Activated CD4-positive, alpha-beta memory T cell treated with anti-CD3 and anti-CD28 coated beads for 36 hours (primary cell): ENCODE measurements at regions of chr11 and their contacts with region 1.

Region 1: GRCh38 chr11:128716661-128717210 is 22.9 kb downstream of the FLI1 start:
- DNase-seq: peak; percentile 72
- H3K4me3 Mint-ChIP-seq: peak overlapping the region; percentile 63
- H3K27ac Mint-ChIP-seq: peak overlapping the region; percentile 97
- H3K4me1 Mint-ChIP-seq: peaks cover 97% of the 10 kb centered on the region
- H3K27me3 Mint-ChIP-seq: no peaks in the 10 kb centered on the region

Region 2: GRCh38 chr11:128302425-128303186 is 414.1 kb before region 1 on chr11:
- CTCF ChIA-PET with region 1: no interaction called
- POLR2A ChIA-PET with region 1: no interaction called
- intact Hi-C with region 1: loop called (anchors 5 kb)
- DNase-seq: peak; percentile 81
- H3K4me3 Mint-ChIP-seq: peak overlapping the region; percentile 79
- H3K27ac Mint-ChIP-seq: peak overlapping the region; percentile 94
- H3K4me1 Mint-ChIP-seq: peaks cover 78% of the 10 kb centered on the region
- H3K27me3 Mint-ChIP-seq: no peaks in the 10 kb centered on the region

Region 3: GRCh38 chr11:128587452-128587851 is 129.3 kb before region 1 on chr11 and contains the start of gene ETS1:
- CTCF ChIA-PET with region 1: no interaction called
- POLR2A ChIA-PET with region 1: no interaction called
- intact Hi-C with region 1: no loop called
- DNase-seq: no peak
- H3K4me3 Mint-ChIP-seq: no peak within 1 kb of the TSS
- H3K27ac Mint-ChIP-seq: no peak within 1 kb of the TSS
- H3K4me1 Mint-ChIP-seq: peaks cover 15% of the 10 kb centered on the region
- H3K27me3 Mint-ChIP-seq: no peaks in the 10 kb centered on the region
- total RNA-seq, gene ETS1: 436 to 444 TPM

Region 4: DNA sequence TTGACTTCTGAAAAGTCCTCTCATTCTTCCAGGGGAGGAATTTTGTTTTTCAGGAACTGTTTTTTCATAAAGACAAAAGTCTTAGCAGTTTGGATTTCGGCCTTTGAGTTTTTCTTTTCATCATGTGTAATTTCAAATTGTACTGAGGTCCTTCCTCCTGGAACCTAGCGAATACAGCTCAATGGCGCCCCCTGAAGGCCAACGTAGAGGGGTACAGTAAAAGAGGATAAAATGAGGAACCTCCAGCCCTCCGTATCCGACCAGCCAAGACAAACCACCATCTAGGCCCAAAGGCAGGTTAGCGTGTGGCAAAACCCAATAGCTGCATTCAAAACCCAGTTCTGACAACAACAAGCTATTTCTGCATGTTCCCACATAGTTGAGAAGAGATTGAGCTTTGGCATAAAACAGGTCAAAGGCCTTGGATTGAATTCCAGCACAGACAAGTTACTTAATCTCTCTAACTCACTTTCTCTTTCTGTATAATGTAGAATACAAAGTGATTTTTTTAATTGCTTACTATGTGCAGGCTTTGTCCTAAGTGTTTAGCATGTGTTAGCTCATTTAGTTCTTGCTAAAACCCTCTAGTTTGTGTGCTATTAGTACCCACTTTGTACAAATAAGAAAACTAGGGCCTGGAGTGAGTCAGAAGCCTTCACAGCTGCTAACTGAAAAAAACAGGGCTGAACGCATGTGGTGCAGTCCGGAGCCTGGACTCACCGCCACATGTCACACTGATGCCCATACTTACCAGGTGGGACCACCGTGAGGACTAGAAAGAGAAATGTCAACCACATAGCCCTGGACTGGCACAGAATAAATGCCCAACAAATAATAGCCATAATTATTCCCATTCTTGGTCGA is 86.1 kb before region 1 on chr11:
- CTCF ChIA-PET with region 1: no interaction called
- POLR2A ChIA-PET with region 1: no interaction called
- intact Hi-C with region 1: no loop called
- DNase-seq: peak; percentile 94
- H3K4me3 Mint-ChIP-seq: peak overlapping the region; percentile 65
- H3K27ac Mint-ChIP-seq: peak overlapping the region; percentile 92
- H3K4me1 Mint-ChIP-seq: peaks cover 66% of the 10 kb centered on the region
- H3K27me3 Mint-ChIP-seq: no peaks in the 10 kb centered on the region

Region 5: DNA sequence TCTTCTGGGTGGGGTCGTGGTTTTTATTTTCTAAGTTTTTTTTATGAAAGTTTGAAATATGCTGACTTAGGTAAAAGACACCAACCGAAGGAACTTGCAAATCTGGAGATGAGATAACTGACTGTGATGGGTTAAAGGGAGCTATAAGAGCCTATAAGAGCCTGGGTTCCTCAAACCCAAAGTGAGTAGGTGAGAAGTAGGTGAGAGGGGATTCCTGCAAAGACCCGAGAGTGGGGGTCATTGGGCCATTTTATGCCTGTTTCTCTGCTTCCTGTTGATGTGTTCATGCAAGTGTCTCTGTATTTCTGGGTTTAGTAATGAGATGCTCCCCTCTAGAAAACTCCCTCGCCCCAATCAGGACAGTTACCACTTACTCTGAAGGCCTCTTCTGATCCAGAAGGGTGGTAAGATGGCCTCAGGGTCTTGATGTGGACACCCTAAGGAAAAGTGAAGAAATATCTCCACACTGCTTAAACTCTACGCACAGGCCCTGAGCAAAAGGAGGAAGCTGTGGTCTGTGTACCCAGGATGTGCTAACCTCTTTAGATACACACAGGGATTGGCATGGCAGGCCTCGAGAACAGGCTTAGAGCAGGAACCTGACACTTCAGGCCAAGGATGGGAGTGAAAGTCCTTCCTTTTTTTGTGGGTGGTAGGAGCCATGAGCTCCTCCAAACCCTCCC is 21.1 kb before region 1 on chr11:
- CTCF ChIA-PET with region 1: interaction called, 4 read pairs
- POLR2A ChIA-PET with region 1: interaction called, 12 read pairs
- intact Hi-C with region 1: loop called (anchors 1 kb)
- DNase-seq: peak; percentile 55
- H3K4me3 Mint-ChIP-seq: peak overlapping the region; percentile 78
- H3K27ac Mint-ChIP-seq: peak overlapping the region; percentile 89
- H3K4me1 Mint-ChIP-seq: peaks cover 57% of the 10 kb centered on the region
- H3K27me3 Mint-ChIP-seq: peaks cover 5% of the 10 kb centered on the region

Region 6: DNA sequence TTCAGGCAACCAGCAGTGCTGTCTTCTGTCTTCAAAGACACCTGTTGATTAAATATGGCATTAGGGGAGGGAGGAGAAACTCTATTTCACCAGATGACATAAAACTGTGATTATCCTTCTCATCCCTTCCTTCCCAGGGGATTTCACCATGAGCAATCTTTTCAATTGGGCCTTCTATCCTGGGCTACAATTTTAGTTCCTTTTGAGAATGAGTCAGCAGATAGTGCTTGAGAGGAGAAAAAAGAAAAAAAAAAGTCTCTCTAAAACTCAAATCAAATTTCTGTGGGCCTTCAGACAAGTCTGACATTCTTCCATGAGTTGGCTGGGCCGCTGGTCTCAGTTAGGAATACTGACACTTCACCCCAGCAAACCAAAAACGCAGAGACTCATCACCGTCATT is 15.7 kb before region 1 on chr11:
- CTCF ChIA-PET with region 1: interaction called, 7 read pairs
- POLR2A ChIA-PET with region 1: interaction called, 12 read pairs
- intact Hi-C with region 1: loop called (anchors 1 kb)
- DNase-seq: no peak
- H3K4me3 Mint-ChIP-seq: no peak overlapping the region
- H3K27ac Mint-ChIP-seq: peak overlapping the region; percentile 59
- H3K4me1 Mint-ChIP-seq: peaks cover 93% of the 10 kb centered on the region
- H3K27me3 Mint-ChIP-seq: no peaks in the 10 kb centered on the region

Region 7: GRCh38 chr11:128733440-128734102 is 16.8 kb after region 1 on chr11:
- CTCF ChIA-PET with region 1: interaction called, 10 read pairs
- POLR2A ChIA-PET with region 1: interaction called, 7 read pairs
- intact Hi-C with region 1: loop called (anchors 2 kb)
- DNase-seq: peak; percentile 65
- H3K4me3 Mint-ChIP-seq: peak overlapping the region; percentile 63
- H3K27ac Mint-ChIP-seq: peak overlapping the region; percentile 79
- H3K4me1 Mint-ChIP-seq: peaks cover 98% of the 10 kb centered on the region
- H3K27me3 Mint-ChIP-seq: no peaks in the 10 kb centered on the region